ENCODE measurements at regions of chr20 and their contacts with region 1.

Region 1: DNA sequence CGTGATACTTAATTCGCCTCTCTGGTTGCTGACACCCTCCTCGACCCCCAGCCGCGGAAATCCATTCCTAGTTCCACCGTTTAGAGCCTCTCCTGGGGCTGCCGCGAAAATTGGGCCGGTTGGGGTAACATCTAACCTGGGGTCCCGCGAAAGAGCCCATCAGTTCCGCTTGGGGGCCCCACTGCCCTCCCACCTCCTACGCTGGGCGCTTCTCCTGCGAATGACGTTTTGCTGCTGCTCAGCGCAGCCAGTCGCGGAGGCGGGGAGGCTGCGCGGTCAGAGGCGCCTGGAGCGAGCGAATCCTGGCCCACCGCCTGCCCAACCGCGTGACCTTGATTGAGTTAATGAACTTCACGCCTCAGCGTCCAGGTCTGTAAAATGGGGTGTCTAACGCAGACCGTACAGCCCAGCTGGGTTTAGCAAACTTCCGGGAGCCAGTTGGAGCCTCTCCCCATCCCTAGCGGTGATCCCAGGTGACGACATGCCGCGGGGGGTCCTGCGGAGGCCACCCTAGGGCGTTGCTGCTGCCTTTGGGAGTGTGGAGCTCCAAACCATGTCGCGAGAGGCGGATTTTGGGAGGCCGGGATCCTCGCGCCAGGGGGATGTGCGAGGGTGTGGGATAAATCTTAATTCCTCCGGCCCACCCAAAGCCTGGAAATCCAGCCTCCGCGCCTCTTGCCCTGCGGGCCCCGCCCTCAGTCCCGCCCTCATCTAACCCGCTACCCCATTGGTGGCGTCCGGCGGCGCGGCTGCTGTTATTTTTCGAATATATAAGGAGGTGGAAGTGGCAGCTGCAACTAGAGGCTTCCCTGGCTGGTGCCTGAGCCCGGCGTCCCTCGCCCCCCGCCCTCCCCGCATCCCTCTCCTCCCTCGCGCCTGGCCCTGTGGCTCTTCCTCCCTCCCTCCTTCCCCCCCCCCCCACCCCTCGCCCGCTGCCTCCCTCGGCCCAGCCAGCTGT is at the start of gene CDC25B:
- DNase-seq: peak; percentile 85
- H3K4me3 Mint-ChIP-seq: peak within 1 kb of the TSS; percentile 99
- H3K27ac Mint-ChIP-seq: peak within 1 kb of the TSS; percentile 98
- H3K4me1 Mint-ChIP-seq: peaks cover 44% of the 10 kb centered on the region
- H3K27me3 Mint-ChIP-seq: no peaks in the 10 kb centered on the region
- total RNA-seq, gene CDC25B: 101 and 103 TPM in 2 replicates

Region 2: DNA sequence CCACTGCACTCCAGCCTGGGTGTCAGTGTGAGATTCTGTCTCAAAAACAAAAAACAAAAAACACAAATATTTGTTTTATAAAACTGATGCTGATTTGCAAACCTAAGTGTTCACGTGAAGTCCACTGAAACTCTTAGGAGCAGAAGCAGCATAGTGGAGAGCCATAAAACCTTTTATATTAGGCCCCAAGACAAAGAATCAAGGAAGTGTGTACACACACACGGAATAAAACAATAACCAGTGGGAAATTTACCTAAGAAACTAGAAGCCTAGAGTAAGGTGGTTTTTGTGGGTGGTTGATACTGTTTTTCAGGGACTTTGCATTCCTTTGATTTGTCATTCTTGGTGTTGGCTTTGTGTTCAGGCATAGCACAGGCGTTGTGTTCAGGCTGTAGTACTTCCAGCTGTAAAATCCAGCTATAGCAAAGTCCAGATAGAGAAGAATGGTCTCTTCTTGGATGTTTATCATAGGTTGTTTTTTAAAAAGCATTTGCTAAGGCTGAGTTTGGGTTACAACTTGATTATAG is 263.6 kb before region 1 on chr20:
- intact Hi-C with region 1: no loop called
- DNase-seq: no peak
- H3K4me3 Mint-ChIP-seq: no peak overlapping the region
- H3K27ac Mint-ChIP-seq: no peak overlapping the region
- H3K4me1 Mint-ChIP-seq: peaks cover 1% of the 10 kb centered on the region
- H3K27me3 Mint-ChIP-seq: no peaks in the 10 kb centered on the region

Region 3: GRCh38 chr20:3811467-3812258 is 15.9 kb after region 1 on chr20:
- intact Hi-C with region 1: loop called (anchors 1 kb)
- DNase-seq: peak; percentile 81
- H3K4me3 Mint-ChIP-seq: peak overlapping the region; percentile 74
- H3K27ac Mint-ChIP-seq: peak overlapping the region; percentile 99
- H3K4me1 Mint-ChIP-seq: peaks cover 58% of the 10 kb centered on the region
- H3K27me3 Mint-ChIP-seq: no peaks in the 10 kb centered on the region